Panc1 (cell line): ENCODE measurements at regions of chr3 and their contacts with region 1.

Region 1: DNA sequence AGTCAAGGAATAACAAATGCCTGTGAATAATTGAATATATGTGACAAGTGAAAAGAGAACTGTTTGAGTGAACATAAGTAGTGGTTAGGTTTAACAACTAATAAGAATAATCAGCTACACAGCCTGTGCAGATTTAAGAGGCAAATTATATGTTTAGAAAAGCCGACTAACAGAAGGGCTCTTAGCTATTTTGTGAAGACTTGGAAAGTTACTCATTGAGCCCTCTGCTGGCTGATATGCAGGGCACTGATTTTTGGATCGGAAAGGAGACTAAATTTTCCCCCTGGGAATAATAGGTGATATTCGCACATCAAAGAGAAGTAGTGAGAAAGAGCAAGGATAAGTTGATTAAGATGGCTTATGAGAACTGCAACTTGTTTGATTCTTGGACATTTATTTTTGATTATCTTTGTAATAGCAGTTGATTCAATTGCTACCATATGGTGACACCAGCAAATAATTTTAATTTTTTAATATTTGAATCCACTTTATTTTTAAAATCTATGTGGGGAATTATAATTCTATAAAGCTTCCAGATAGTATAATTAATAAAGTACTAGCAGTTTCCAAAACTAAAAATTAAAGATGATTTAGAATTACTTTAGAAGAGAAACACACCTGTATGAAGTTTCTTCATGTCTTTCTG is 156.2 kb downstream of the NLGN1 start:
- DNase-seq: peak; percentile 15
- ATAC-seq: no peak
- H3K4me3 ChIP-seq: no peak overlapping the region
- H3K27ac ChIP-seq: no peak overlapping the region
- H3K4me1 ChIP-seq: no peaks in the 10 kb centered on the region
- H3K27me3 ChIP-seq: no peaks in the 10 kb centered on the region
- CTCF ChIP-seq: peak; percentile 68; the same call in 1 of the 2 replicates

Region 2: DNA sequence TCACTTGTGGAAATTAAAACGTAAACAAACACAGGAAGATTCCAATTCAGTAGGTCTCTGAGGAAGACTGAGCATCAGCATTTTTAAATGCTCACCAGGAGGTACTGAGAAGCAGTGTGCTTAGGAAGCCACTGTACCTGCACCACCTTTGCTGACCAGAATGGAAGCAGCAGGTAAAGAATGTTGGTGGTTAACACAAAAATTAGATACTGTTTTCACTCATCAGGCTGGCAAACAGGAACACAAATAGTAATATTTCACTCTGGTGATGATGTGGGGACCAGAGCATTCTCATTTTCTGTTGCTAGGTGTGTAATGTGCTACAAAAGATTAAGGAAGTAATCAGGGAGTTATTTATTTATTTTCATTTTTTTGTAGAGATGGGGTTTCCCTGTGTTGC is 1075.6 kb before region 1 on chr3:
- CTCF ChIA-PET with region 1: no interaction called
- POLR2A ChIA-PET with region 1: no interaction called
- in situ Hi-C with region 1: no loop called
- intact Hi-C with region 1: no loop called
- DNase-seq: no peak
- ATAC-seq: no peak
- H3K4me3 ChIP-seq: no peak overlapping the region
- H3K27ac ChIP-seq: no peak overlapping the region
- H3K4me1 ChIP-seq: no peaks in the 10 kb centered on the region
- H3K27me3 ChIP-seq: no peaks in the 10 kb centered on the region
- CTCF ChIP-seq: no peak

Region 3: GRCh38 chr3:173411375-173411973 is 142.3 kb before region 1 on chr3:
- CTCF ChIA-PET with region 1: no interaction called
- POLR2A ChIA-PET with region 1: no interaction called
- in situ Hi-C with region 1: no loop called
- intact Hi-C with region 1: loop called (anchors 2 kb)
- DNase-seq: no peak
- ATAC-seq: no peak
- H3K4me3 ChIP-seq: no peak overlapping the region
- H3K27ac ChIP-seq: no peak overlapping the region
- H3K4me1 ChIP-seq: no peaks in the 10 kb centered on the region
- H3K27me3 ChIP-seq: peaks cover 8% of the 10 kb centered on the region
- CTCF ChIP-seq: peak; percentile 58; the same call in 1 of the 2 replicates